ENCODE measurements at regions of chr7 and their contacts with region 1.

Region 1: GRCh38 chr7:22732556-22733126 is 5.6 kb downstream of the IL6 start:
- DNase-seq: no peak

Region 2: DNA sequence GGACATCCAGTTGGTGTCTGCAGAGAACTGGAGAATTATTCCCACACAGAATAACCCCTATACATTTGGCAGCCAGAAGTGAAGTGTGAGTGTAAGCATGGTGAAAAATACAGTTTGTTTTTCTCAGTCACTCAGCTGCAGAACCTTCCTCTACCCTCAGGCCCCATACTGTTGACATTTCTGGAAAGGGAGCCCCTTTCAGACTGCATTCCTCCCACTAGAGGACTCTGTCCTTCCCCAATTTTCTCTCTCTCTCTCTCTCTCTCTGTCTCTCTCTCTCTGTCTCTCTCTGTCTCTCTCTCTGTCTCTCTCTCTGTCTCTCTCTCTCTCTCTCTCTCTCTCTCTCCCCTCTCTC is 145.9 kb before region 1 on chr7:
- in situ Hi-C with region 1: loop called (anchors 10 kb)
- DNase-seq: peak; percentile 72

Region 3: GRCh38 chr7:22962775-22963358 is 230.2 kb after region 1 on chr7:
- in situ Hi-C with region 1: no loop called
- DNase-seq: no peak

Measured in SK-MEL-5 (cell line).